Right ventricle myocardium inferior (tissue), 1 donor: ENCODE measurements at regions of chr20 and their contacts with region 1.

Region 1: DNA sequence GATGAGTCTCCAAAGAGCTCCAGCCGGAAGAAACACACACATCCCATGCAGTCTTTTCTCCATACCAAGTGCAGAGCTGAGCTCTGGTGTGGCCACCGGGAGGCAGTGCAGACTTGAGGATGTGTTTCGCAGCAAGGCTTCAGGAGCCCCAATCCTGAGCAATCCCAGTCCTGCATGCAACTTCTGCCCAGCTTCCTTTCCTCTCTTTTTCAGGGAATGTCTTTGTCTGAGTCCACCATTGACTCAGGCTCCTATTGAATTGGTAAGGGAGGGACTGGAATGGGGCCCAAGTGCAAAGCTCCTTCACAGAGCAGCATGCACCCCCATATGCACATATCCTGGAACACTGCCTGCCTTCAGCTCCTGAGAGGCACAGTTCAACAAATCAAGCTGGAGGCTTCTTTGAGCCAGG is 50.5 kb upstream of the ASIP start:
- DNase-seq: peak; percentile 80
- ATAC-seq: peak; percentile 96

Region 2: DNA sequence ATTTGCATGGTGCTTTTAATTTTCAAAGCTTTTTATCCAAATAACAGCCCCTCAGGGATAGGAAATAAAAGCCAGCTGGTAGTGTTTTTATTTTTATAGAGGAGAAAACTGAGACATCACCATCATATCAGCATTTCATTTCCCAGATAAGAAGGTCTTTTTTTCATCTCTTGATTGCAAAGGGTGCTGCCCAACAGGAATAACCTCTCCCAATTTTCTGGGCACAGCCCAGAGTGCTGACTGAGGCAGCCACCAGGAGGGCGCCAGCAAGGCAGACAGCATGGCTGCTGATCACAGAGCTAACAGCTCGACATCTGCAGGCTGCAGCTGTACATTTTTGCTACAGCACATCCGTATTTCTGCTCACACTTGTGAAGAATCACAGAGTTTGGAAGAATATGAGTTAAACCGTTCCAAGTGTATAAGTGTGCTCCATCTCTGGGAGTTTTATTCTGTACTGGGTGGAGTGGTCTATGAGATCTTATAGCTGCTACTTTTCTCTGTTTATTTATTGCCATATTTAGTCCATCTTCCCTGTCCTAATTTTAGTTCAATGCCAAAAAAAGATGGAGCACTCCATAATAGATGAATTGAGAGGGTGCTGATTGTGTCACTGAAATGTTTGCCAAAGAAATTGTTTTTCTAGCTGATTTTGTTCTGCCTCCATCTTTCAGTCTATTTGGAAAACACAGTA is 614.1 kb before region 1 on chr20:
- intact Hi-C with region 1: no loop called
- DNase-seq: no peak
- ATAC-seq: peak; percentile 56

Region 3: DNA sequence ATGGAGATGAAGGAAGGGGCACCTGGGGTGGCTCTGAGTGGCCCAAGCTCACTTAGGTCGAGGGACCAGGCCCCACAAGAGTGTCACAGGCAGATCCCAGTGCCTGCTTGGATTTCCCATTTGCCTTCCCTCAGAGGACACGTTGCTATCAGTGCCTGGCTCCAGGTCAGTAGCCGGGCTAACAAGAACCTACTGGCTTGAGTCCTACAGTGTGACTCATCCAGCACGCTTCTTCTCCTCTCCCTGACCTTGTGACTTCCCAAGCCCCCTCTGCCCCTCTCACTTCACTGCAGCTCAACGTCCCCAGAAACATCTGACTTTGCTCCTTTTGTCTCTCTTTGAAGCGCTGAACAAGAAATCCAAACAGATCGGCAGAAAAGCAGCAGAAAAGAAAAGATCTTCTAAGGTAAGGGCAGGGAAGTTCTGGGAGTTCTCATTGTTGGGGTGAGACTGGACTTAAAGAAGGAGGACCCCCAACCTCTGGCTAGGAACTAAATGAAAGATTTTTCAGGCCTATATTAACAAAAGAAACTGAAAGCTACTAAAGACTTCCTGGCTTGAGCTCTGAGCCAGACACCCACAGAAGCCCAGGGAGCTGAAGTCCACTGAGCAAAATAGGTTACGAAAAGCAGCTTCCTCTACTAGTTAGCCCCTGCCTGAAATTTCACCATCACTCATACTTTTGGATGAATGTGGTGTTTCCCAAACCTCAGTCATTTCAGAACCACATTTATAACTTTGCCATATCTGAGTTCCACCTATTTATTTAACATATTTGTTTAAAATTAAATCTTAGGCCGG is 72.0 kb after region 1 on chr20:
- intact Hi-C with region 1: no loop called
- DNase-seq: no peak
- ATAC-seq: peak; percentile 92

Region 4: GRCh38 chr20:34282041-34282440 is 91.4 kb after region 1 on chr20:
- intact Hi-C with region 1: no loop called
- DNase-seq: no peak
- ATAC-seq: no peak

Region 5: GRCh38 chr20:34420146-34420545 is 229.5 kb after region 1 on chr20:
- intact Hi-C with region 1: no loop called
- DNase-seq: no peak
- ATAC-seq: no peak

Region 6: DNA sequence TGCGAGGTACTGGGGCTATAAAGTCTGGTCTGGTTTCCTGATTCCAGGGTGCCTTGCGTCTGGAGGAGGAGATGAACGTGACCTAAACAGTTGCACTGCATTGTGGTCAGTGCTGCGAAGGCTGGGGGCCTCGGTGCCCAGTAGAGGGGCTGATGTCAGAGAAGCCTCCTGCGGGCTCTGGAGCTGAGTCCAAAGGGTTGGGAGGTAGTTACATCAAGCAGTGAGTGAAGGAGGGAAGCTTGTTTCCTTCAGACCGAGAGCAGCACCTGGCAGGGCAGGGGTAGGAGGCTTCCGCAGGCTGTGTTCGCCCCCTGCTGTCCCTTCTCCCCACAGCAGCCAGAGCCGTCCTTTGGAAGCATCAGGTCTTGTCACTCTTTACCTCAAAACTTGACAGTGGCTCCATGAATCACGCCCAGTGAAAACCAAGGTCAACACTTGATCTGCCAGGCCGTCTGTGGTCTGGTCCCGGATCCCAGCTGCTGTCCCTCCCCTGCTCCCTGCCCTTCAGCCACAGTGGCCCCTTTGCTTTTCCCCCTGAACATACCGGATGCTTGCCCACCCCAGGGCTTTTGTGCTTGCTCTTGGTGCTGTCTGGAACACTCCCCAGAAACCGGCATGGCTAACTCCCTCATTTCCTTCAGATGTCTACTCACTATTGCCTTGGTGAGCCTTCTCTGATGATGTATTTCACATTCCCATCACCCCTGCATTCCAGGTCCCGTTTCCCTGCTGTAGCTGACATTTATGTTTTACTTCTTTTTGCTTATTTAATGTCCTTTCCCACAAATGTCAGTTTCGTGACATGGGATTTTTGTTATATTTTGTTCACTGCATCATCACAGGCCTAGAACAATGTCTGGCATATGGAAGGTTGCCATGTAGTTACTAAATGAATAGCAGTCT is 332.5 kb after region 1 on chr20:
- intact Hi-C with region 1: loop called (anchors 2 kb)
- DNase-seq: no peak
- ATAC-seq: peak; percentile 20